Activated T-helper 1 cell treated with anti-CD3 and anti-CD28 coated beads, Interleukin-12 subunit alpha, Interleukin-12 subunit beta, Interleukin-2, Interleukin-4 antibody, amounts not matched to agents 30 ng/mL and 10 ng/mL and 1 ng/mL, durations not matched to agents 14 hours and 24 hours and 36 hours (primary cell): ENCODE measurements at regions of chr12 and their contacts with region 1.

Region 1: GRCh38 chr12:2376908-2377657 is 324.3 kb downstream of the CACNA1C start:
- DNase-seq: no peak
- H3K4me3 Mint-ChIP-seq: no peak overlapping the region
- H3K27ac Mint-ChIP-seq: no peak overlapping the region
- H3K4me1 Mint-ChIP-seq: peaks cover 36% of the 10 kb centered on the region
- H3K27me3 Mint-ChIP-seq: peaks cover 9% of the 10 kb centered on the region

Region 2: GRCh38 chr12:2358986-2359658 is 18.0 kb before region 1 on chr12:
- intact Hi-C with region 1: loop called (anchors 1 kb)
- DNase-seq: no peak
- H3K4me3 Mint-ChIP-seq: peak overlapping the region; percentile 12
- H3K27ac Mint-ChIP-seq: peak overlapping the region; percentile 49
- H3K4me1 Mint-ChIP-seq: peaks cover 53% of the 10 kb centered on the region
- H3K27me3 Mint-ChIP-seq: peaks cover 7% of the 10 kb centered on the region

Region 3: DNA sequence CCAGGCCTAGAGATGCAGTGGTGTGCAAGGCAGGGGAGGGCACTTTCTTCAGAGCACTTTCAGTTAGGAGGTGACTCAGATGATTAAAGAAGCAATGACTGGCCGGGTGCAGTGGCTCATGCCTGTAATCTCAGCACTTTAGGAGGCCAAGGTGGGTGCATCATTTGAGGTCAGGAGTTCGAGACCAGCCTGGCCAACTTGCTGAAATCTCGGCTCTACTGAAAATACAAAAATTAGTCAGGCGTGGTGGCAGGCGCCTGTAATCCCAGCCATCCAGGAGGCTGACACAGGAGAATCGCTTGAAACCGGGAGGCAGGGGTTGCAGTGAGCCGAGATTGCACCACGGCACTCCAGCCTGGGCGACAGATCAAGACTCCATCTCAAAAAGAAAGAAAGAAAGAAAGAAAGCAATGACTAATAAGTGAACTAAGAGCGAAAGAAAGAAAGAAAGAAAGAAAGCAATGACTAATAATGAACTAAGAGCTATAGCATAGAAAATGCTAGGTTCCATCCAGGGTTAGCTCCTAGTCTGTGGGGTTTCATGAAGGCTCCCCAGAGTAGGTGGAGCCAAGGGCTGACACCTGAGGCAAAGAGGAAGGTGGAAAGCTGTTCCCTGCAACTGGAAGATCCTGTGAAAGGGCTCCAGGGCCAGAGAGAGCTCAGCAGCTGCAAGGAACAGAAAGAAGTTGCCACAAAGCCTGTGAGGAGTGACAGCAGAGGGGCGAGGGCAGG is 10.2 kb after region 1 on chr12:
- intact Hi-C with region 1: loop called (anchors 1 kb)
- DNase-seq: peak; percentile 10
- H3K4me3 Mint-ChIP-seq: no peak overlapping the region
- H3K27ac Mint-ChIP-seq: no peak overlapping the region
- H3K4me1 Mint-ChIP-seq: no peaks in the 10 kb centered on the region
- H3K27me3 Mint-ChIP-seq: peaks cover 31% of the 10 kb centered on the region

Region 4: DNA sequence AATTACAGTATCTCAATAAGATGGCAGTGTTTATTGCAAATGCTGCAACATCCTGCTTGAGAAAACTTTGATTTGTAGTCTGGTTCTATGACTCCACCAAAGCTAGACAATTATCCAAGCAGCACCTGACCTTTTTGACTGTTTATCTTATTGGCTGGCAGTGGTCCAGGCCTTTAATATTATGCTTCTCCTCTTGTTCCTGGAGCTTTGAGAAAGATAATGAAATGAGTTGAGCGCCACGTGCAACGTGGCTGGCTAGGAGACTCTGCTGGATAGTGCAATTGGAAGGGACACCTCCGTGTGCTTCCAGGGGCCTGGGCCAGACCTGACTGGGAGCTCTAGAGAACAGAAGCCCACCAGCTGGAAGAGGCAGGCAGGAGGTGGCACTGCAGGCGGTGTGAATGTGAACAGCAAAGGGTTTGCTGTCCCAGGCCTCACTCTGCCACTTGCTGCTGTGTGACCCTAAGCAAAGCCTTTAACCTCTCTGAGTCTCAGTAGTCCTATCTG is 25.0 kb after region 1 on chr12:
- intact Hi-C with region 1: no loop called
- DNase-seq: no peak
- H3K4me3 Mint-ChIP-seq: no peak overlapping the region
- H3K27ac Mint-ChIP-seq: no peak overlapping the region
- H3K4me1 Mint-ChIP-seq: no peaks in the 10 kb centered on the region
- H3K27me3 Mint-ChIP-seq: peaks cover 19% of the 10 kb centered on the region

Region 5: DNA sequence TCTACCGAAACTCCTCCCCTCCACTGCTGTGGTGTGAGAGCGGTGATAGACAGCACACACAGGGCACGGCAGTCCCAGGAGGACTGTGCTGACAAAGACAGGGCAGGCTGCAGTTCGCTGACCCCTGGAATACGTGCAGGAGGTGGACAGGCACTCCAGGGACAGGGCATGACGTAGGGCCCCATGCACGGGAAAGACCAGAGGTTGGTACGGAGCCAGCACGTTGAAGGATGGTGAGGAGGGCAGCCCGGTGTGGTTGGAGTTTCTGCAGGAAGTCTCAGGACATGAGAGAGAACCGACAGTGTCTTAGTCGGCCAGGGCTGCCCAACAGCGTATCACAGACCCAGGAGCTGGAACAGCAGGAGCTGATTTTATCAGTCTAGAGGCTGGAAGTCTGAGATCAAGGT is 163.5 kb after region 1 on chr12:
- intact Hi-C with region 1: loop called (anchors 5 kb)
- DNase-seq: no peak
- H3K4me3 Mint-ChIP-seq: no peak overlapping the region
- H3K27ac Mint-ChIP-seq: no peak overlapping the region
- H3K4me1 Mint-ChIP-seq: peaks cover 23% of the 10 kb centered on the region
- H3K27me3 Mint-ChIP-seq: no peaks in the 10 kb centered on the region